AG04449 (cell line): ENCODE measurements at regions of chr3 and their contacts with region 1.

Region 1: DNA sequence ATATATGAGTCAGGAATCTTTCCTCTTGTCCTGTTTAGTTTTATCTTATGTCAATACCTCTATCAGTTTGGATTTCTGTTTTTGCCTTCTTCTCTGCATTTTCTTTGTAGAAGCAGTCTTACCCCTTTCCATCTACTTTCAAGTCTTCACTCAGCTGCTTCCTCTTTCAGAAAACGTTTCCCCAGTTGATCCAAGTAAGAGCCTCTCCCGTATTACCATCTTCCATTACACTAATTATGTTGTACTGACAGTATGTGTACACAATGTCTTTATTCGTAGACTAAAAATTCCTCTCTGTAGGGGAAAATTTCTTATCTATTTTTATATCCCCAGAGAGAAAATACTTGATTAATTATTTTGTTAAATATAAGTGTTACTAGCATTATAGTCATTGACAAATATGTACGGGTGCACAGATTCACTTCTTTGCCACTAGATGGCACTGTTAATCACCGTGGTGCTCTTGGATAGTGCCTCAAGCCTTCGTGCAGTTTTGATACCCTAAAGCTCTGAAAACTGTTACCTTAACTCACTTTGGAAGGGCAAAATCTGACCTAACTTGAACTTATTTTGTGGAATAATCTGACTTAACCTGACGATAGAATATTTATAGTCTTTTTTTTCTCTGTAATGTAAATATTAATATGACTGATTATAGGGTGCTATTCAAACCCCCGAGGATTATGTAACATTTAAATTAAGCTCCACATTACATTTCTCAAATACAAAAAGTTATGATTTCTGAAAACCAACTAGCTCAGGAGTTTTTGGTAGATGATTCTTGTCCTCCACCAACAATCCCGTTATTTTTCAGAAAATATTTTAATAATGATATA is 74.2 kb upstream of the POU1F1 start:
- DNase-seq: no peak
- H3K4me3 ChIP-seq: no peak overlapping the region
- CTCF ChIP-seq: peak; percentile 71

Region 2: GRCh38 chr3:87041191-87041590 is 309.4 kb before region 1 on chr3:
- CTCF ChIA-PET with region 1: no interaction called
- POLR2A ChIA-PET with region 1: no interaction called
- DNase-seq: no peak
- H3K4me3 ChIP-seq: no peak overlapping the region
- CTCF ChIP-seq: no peak

Region 3: GRCh38 chr3:87161417-87161816 is 189.2 kb before region 1 on chr3:
- CTCF ChIA-PET with region 1: no interaction called
- POLR2A ChIA-PET with region 1: no interaction called
- DNase-seq: no peak
- H3K4me3 ChIP-seq: no peak overlapping the region
- CTCF ChIP-seq: no peak

Region 4: GRCh38 chr3:87298111-87298718 is 52.4 kb before region 1 on chr3:
- CTCF ChIA-PET with region 1: interaction called, 20 read pairs
- POLR2A ChIA-PET with region 1: no interaction called
- DNase-seq: no peak
- H3K4me3 ChIP-seq: no peak overlapping the region
- CTCF ChIP-seq: peak; percentile 38

Region 5: GRCh38 chr3:87333393-87333892 is 17.1 kb before region 1 on chr3:
- CTCF ChIA-PET with region 1: interaction called, 14 read pairs
- POLR2A ChIA-PET with region 1: no interaction called
- DNase-seq: peak; percentile 84
- H3K4me3 ChIP-seq: no peak overlapping the region
- CTCF ChIP-seq: no peak

Region 6: DNA sequence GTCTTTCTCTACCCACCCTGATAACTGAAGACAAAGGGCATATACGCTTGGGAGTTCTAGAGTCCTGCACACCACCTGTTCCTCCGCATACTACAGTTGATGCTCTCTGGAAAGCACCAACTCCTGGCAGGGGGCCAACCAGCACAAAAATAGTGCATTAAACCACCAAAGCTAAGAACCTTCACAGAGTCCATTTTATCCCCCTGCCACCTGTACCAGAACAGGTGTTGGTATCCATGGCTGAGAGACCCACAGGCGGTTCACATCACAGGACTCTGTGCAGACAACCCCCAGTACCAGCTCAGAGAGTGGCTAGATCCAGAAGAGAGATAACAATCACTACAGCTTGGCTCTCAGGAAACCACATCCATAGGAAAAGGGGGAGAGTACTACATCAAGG is 40.2 kb after region 1 on chr3:
- CTCF ChIA-PET with region 1: interaction called, 19 read pairs
- POLR2A ChIA-PET with region 1: no interaction called
- DNase-seq: no peak
- H3K4me3 ChIP-seq: no peak overlapping the region
- CTCF ChIP-seq: no peak

Region 7: GRCh38 chr3:87509401-87509800 is 158.8 kb after region 1 on chr3:
- CTCF ChIA-PET with region 1: interaction called, 257 read pairs
- POLR2A ChIA-PET with region 1: no interaction called
- DNase-seq: no peak
- H3K4me3 ChIP-seq: no peak overlapping the region
- CTCF ChIP-seq: no peak